Natural killer cell (primary cell): ENCODE measurements at regions of chr11 and their contacts with region 1.

Region 1: GRCh38 chr11:118295834-118296454 is 8.6 kb upstream of the CD3E start:
- DNase-seq: peak in 1 of 2 donors; percentile 78
- ATAC-seq: peak in 2 of 3 donors; percentile 66 to 81
- H3K4me3 ChIP-seq: no peak overlapping the region
- H3K4me3 Mint-ChIP-seq: no peak overlapping the region
- H3K27ac ChIP-seq: no peak overlapping the region
- H3K27ac Mint-ChIP-seq: peak overlapping the region in 1 of 2 donors; percentile 75
- H3K4me1 ChIP-seq: peaks cover 7% of the 10 kb centered on the region
- H3K4me1 Mint-ChIP-seq: peaks cover 14 to 27% of the 10 kb centered on the region in 2 donors
- H3K27me3 ChIP-seq: no peaks in the 10 kb centered on the region
- H3K27me3 Mint-ChIP-seq: peaks cover 3 to 6% of the 10 kb centered on the region in 2 donors
- CTCF ChIP-seq: peak; percentile 67

Region 2: GRCh38 chr11:118240999-118241768 is 54.8 kb before region 1 on chr11:
- intact Hi-C with region 1: no loop called
- DNase-seq: peak; percentile 33 to 84
- ATAC-seq: peak; percentile 91 to 97 (median 93)
- H3K4me3 ChIP-seq: no peak overlapping the region
- H3K4me3 Mint-ChIP-seq: peak overlapping the region; percentile 79
- H3K27ac ChIP-seq: peak overlapping the region; percentile 67
- H3K27ac Mint-ChIP-seq: peak overlapping the region; percentile 74 to 86
- H3K4me1 ChIP-seq: peaks cover 33% of the 10 kb centered on the region
- H3K4me1 Mint-ChIP-seq: peaks cover 55 to 61% of the 10 kb centered on the region in 2 donors
- H3K27me3 ChIP-seq: no peaks in the 10 kb centered on the region
- H3K27me3 Mint-ChIP-seq: no peaks in the 10 kb centered on the region
- CTCF ChIP-seq: no peak

Region 3: GRCh38 chr11:118353084-118353710 is 57.3 kb after region 1 on chr11:
- intact Hi-C with region 1: loop called (anchors 1 kb)
- DNase-seq: peak in 1 of 2 donors; percentile 80
- ATAC-seq: peak in 2 of 3 donors; percentile 25 to 58
- H3K4me3 ChIP-seq: no peak overlapping the region
- H3K4me3 Mint-ChIP-seq: no peak overlapping the region
- H3K27ac ChIP-seq: no peak overlapping the region
- H3K27ac Mint-ChIP-seq: peak overlapping the region in 1 of 2 donors; percentile 36
- H3K4me1 ChIP-seq: peaks cover 3% of the 10 kb centered on the region
- H3K4me1 Mint-ChIP-seq: peaks cover 6 to 7% of the 10 kb centered on the region in 2 donors
- H3K27me3 ChIP-seq: no peaks in the 10 kb centered on the region
- H3K27me3 Mint-ChIP-seq: no peaks in the 10 kb centered on the region
- CTCF ChIP-seq: peak; percentile 87